AG04450 (cell line): ENCODE measurements at regions of chr1 and their contacts with region 1.

Region 1: DNA sequence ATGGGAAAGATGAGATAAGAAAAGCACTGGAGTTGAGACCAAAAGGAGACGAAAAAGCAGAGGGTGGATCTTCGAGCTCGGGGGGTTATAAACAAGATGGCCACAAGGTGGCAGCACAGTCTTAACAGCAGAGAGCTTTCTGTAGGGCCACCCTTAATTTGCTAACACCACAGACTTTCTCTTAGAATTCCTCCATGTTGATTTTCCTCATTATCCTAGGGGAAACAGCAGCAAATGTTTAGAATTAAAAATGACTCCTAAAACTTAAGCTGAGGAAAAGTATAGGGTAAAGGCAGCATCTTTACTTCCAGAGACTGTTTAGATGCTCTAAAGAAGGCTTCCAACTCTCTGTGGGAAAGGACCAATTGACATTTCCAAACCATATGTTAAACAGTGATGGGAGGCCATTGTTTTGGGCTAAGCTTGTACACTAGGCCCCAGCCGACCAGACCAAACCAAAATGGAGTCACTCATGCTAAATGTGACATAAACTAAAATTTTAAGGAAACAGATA is 2.5 kb upstream of the APOBEC4 start:
- DNase-seq: peak; percentile 70
- H3K4me3 ChIP-seq: no peak overlapping the region
- H3K27ac ChIP-seq: no peak overlapping the region
- H3K27me3 ChIP-seq: no peaks in the 10 kb centered on the region
- CTCF ChIP-seq: peak; percentile 91

Region 2: GRCh38 chr1:183567584-183567983 is 88.0 kb before region 1 on chr1:
- CTCF ChIA-PET with region 1: no interaction called
- POLR2A ChIA-PET with region 1: no interaction called
- DNase-seq: no peak
- H3K4me3 ChIP-seq: no peak overlapping the region
- H3K27ac ChIP-seq: no peak overlapping the region
- H3K27me3 ChIP-seq: no peaks in the 10 kb centered on the region
- CTCF ChIP-seq: no peak

Region 3: GRCh38 chr1:183670178-183670577 is 14.6 kb after region 1 on chr1:
- CTCF ChIA-PET with region 1: interaction called, 19 read pairs
- POLR2A ChIA-PET with region 1: no interaction called
- DNase-seq: no peak
- H3K4me3 ChIP-seq: no peak overlapping the region
- H3K27ac ChIP-seq: no peak overlapping the region
- H3K27me3 ChIP-seq: no peaks in the 10 kb centered on the region
- CTCF ChIP-seq: peak; percentile 31; the same call in 1 of the 2 replicates

Region 4: DNA sequence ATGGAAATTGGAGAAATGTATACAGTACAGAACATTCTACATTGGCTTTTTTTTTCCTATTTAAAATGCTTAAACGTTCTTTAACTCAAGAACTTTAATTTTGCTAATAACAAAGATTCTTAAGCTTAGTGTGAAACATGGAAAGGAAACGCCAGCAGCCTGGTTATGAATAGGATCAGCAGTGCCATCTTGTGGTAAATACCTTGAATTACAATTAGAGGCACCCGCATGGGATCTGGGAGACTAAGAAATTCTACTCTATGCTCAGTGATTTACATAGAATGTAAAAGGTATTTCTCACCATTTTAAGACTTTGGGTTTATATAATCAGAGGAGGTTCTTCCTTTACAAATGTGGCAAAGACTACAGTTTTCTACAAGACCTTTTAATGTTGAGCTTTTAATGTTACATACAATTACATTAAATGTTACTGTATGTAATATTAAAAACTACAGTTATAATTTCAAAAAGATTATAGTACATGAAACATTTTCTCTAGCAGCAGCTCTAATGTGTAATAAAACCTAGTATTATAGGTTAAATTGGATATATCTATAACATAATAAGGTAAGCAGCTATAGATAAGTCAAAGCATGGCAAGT is 29.6 kb after region 1 on chr1:
- CTCF ChIA-PET with region 1: interaction called, 126 read pairs
- POLR2A ChIA-PET with region 1: no interaction called
- DNase-seq: no peak
- H3K4me3 ChIP-seq: no peak overlapping the region
- H3K27ac ChIP-seq: no peak overlapping the region
- H3K27me3 ChIP-seq: no peaks in the 10 kb centered on the region
- CTCF ChIP-seq: peak; percentile 71

Region 5: DNA sequence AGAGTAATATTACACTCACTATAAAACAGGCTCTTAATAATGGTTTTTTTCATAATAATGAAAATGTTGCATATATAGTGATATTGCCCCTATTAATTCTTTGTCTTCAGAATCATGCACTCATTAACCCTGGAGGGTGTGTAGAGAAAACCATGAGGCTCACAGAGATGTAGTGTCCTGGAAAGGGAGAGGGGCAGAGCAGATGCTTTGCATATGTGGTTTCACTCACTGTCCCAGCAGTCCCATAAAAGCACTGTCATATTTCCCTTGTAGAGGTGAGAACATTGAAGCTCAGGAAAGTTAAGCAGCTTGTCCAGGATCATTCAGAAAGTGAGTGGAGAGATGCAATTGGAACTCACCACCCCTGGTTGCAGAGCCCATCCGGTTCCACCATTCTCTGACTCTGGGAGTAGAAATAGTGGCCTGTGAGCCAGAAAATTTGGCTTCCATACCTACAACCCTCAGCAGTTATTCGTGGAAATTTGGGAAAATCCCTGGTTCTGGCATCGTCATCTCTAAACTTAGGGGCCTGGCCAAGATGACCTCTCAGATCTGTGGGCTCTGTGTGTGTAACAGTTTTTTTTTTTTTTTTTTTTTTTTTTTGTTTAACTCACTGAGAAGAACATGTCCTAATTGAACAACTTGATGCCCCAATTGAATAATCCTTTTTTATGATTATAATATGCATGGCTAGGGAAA is 235.7 kb after region 1 on chr1:
- CTCF ChIA-PET with region 1: interaction called, 15 read pairs
- POLR2A ChIA-PET with region 1: no interaction called
- DNase-seq: no peak
- H3K4me3 ChIP-seq: no peak overlapping the region
- H3K27ac ChIP-seq: no peak overlapping the region
- H3K27me3 ChIP-seq: no peaks in the 10 kb centered on the region
- CTCF ChIP-seq: no peak

Region 6: GRCh38 chr1:183915625-183916510 is 260.2 kb after region 1 on chr1:
- CTCF ChIA-PET with region 1: interaction called, 254 read pairs
- POLR2A ChIA-PET with region 1: interaction called, 10 read pairs
- DNase-seq: peak; percentile 97
- H3K4me3 ChIP-seq: peak overlapping the region; percentile 11; the same call in 1 of the 2 replicates
- H3K27ac ChIP-seq: peak overlapping the region; percentile 74
- H3K27me3 ChIP-seq: no peaks in the 10 kb centered on the region
- CTCF ChIP-seq: peak; percentile 85

Region 7: DNA sequence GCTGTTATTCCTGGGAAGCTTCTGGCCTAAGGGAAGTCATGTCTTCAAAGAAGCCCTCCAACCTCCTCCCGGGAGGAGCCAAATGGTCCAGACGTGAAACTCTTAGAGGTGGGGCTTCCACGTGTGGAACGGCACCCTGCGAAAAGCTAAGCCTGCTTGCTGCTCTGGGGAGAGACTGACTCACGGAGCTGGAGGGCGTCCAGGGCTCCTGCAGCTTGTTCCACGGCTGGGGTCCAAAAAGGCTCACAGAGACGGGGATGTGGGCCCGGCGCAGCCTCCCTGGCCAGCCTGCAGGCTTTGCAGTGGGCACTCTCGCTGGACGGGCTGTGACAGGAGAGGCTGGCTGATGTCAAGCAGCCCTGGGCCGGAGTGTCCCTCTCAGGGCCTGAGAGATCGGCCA is 276.8 kb after region 1 on chr1:
- CTCF ChIA-PET with region 1: interaction called, 22 read pairs
- POLR2A ChIA-PET with region 1: no interaction called
- DNase-seq: peak; percentile 78
- H3K4me3 ChIP-seq: no peak overlapping the region
- H3K27ac ChIP-seq: no peak overlapping the region
- H3K27me3 ChIP-seq: no peaks in the 10 kb centered on the region
- CTCF ChIP-seq: no peak